AG04449 (cell line): ENCODE measurements at regions of chr3 and their contacts with region 1.

Region 1: DNA sequence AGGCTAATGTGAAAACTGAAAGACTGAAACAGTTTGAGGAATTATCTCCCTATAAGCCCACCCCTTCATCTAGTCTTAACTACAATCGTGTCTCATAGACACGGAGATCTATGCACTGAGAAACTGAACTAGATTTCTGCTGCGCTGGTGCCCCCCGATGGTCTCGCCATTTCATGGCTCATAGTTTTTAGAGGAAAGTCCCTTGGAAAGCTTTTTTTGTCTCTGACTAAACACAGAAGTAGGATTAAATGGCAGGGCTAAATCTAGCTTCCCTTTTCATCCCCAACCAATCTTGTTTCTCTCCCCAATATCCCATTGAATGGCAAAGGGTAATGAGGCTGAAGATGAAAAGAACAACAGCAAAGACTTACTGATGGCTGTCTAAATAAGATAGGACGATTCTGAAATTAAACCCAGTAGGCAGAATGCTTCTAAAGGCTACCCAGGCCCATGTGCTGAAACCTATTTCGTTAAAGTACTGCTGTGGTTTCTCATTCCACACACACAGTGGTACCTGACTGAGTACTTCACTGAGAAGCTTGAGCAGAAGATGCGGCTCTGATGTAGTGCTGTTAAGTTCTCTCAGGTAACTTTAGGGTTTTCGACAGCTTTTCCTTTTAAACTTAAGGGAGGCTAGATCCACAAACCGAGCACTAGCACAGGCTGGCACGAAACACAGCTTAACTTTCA is 142.7 kb downstream of the GADL1 start:
- DNase-seq: no peak
- H3K4me3 ChIP-seq: no peak overlapping the region
- CTCF ChIP-seq: peak; percentile 43

Region 2: GRCh38 chr3:30112902-30113484 is 638.8 kb before region 1 on chr3:
- CTCF ChIA-PET with region 1: interaction called, 10 read pairs
- POLR2A ChIA-PET with region 1: no interaction called
- DNase-seq: peak; percentile 21
- H3K4me3 ChIP-seq: no peak overlapping the region
- CTCF ChIP-seq: peak; percentile 32